ENCODE measurements at regions of chr15 and their contacts with region 1.

Region 1: DNA sequence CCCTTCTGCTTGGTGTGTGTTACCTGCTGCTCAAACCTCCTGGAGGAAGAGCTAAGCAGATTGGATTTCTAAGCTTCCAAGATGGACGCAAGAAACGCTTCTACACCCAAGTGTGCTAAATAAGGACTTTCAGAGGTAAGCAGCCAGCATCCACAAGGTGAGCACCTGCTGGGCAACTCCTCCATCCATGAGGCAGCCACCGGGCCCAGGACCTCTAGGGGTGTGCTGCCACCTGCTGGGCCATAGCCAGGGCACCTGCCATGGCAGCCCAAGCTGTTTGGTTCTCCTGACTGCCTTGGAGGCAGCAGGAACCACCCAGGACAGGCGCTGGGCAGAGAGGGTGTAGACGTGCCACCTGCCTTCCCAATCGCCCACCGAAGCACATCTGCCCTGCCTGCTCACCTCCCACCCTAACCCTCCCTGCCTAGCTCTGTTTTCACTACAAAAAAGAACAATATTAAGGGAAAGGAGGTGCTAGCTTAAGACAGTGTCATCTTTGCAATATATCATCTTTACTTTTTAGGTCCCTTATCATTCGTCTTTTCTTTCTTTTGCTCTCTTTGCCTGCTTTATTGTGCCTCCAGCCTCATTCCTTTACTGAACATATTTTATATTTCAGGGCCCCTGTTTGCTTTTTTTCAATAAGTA is 12.9 kb downstream of the C15orf62 start:
- DNase-seq: peak; percentile 70 to 88 (median 78)
- ATAC-seq: peak; percentile 94
- H3K4me3 ChIP-seq: no peak overlapping the region
- H3K4me3 Mint-ChIP-seq: no peak overlapping the region
- H3K27ac ChIP-seq: no peak overlapping the region
- H3K27ac Mint-ChIP-seq: peak overlapping the region; percentile 1
- H3K4me1 ChIP-seq: peaks cover 9% of the 10 kb centered on the region
- H3K4me1 Mint-ChIP-seq: peaks cover 32% of the 10 kb centered on the region
- H3K27me3 ChIP-seq: no peaks in the 10 kb centered on the region
- H3K27me3 Mint-ChIP-seq: no peaks in the 10 kb centered on the region
- CTCF ChIP-seq: peak; percentile 82

Region 2: GRCh38 chr15:40513609-40514008 is 269.1 kb before region 1 on chr15:
- CTCF ChIA-PET with region 1: no interaction called
- POLR2A ChIA-PET with region 1: no interaction called
- intact Hi-C with region 1: loop called in 1 of 2 experiments (anchors 2 kb)
- DNase-seq: no peak
- ATAC-seq: no peak
- H3K4me3 ChIP-seq: no peak overlapping the region
- H3K4me3 Mint-ChIP-seq: no peak overlapping the region
- H3K27ac ChIP-seq: no peak overlapping the region
- H3K27ac Mint-ChIP-seq: no peak overlapping the region
- H3K4me1 ChIP-seq: peaks cover 13% of the 10 kb centered on the region
- H3K4me1 Mint-ChIP-seq: peaks cover 16% of the 10 kb centered on the region
- H3K27me3 ChIP-seq: peaks cover 21 to 30% of the 10 kb centered on the region in 2 experiments
- H3K27me3 Mint-ChIP-seq: peaks cover 54% of the 10 kb centered on the region
- CTCF ChIP-seq: no peak

Region 3: DNA sequence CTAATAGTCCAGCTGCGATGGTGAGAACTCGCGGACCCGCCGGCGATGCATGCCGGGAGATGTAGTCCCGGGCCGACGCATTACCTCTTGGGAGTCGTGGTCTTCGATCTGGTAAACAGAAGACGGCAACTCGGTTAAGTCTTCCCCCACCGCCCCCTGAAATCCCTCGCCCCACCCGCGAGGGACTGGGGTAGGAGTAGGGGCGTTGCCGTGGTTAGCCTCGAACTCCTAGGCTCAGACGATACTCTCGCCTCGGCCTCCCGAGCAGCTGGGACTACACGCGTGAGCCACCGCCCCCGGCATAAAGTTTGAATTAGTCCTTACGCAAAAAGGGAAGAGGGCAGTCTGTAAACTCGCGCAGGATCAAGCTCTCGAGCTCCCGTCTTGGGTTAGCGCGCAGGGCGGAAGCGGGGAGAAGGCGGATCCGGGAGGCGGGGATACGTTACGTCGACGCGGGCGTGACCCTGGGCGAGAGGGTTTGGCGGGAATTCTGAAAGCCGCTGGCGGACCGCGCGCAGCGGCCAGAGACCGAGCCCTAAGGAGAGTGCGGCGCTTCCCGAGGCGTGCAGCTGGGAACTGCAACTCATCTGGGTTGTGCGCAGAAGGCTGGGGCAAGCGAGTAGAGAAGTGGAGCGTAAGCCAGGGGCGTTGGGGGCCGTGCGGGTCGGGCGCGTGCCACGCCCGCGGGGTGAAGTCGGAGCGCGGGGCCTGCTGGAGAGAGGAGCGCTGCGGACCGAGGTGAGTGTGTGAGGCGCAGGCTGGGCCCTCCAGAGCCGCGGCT is 87.8 kb before region 1 on chr15 and contains the start of gene RAD51:
- CTCF ChIA-PET with region 1: interaction called, 10 read pairs
- POLR2A ChIA-PET with region 1: interaction called, 5 read pairs
- intact Hi-C with region 1: no loop called
- DNase-seq: peak; percentile 87 to 96 (median 93)
- ATAC-seq: peak; percentile 91
- H3K4me3 ChIP-seq: peak within 1 kb of the TSS; percentile 82
- H3K4me3 Mint-ChIP-seq: peak within 1 kb of the TSS; percentile 97
- H3K27ac ChIP-seq: peak within 1 kb of the TSS; percentile 94 to 99
- H3K27ac Mint-ChIP-seq: peak within 1 kb of the TSS; percentile 98
- H3K4me1 ChIP-seq: peaks cover 23% of the 10 kb centered on the region
- H3K4me1 Mint-ChIP-seq: peaks cover 21% of the 10 kb centered on the region
- H3K27me3 ChIP-seq: no peaks in the 10 kb centered on the region
- H3K27me3 Mint-ChIP-seq: no peaks in the 10 kb centered on the region
- CTCF ChIP-seq: no peak
- total RNA-seq, gene RAD51: 0.64 to 1.5 TPM

Region 4: DNA sequence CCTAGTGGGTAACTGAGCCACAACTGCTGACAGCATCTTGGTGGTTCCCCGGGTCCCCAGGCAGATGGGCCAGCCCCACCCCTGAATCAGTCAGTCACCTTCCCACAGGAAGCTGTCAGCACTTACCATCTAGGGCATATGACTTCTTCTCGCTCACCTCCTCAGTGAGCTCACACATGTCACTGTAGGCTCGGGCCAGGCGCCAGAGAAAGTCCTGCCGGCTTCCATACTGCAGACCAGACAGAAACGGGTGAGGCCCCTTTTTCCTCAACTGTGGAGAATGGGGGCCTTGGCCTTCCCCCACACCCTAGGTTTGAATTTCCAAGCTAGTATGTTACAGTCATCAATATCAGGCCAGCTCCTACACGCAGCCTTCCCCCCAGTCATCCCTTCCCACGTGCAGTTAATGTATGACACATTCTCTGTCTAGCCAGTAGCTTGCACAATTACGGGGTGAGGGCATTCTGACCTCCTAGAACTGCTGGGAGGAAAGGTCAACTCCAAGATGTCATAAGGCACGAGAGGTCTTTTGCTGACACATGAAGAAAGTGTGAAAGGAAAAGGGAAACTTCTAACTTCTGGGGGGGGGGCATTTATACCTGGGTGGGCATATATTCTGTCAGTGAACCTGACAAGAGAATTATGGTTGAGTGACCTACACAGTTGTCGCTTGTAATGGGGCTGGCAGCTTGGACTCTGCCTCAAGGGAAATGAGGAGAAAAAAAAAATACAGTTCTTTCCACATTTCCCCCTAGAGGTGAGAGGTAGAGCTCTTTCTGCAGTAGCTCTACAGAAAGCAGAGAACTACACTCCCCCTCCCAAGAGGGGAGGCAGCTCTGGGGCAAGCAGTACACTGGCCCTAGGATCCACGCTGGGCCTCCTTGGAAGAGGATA is 38.5 kb before region 1 on chr15:
- CTCF ChIA-PET with region 1: interaction called, 8 read pairs
- POLR2A ChIA-PET with region 1: no interaction called
- intact Hi-C with region 1: loop called (anchors 5 kb)
- DNase-seq: peak; percentile 25 to 91 (median 44)
- ATAC-seq: peak; percentile 91
- H3K4me3 ChIP-seq: no peak overlapping the region
- H3K4me3 Mint-ChIP-seq: peak overlapping the region; percentile 20
- H3K27ac ChIP-seq: peak overlapping the region; percentile 52 to 81
- H3K27ac Mint-ChIP-seq: peak overlapping the region; percentile 96
- H3K4me1 ChIP-seq: peaks cover 22% of the 10 kb centered on the region
- H3K4me1 Mint-ChIP-seq: peaks cover 10% of the 10 kb centered on the region
- H3K27me3 ChIP-seq: no peaks in the 10 kb centered on the region
- H3K27me3 Mint-ChIP-seq: no peaks in the 10 kb centered on the region
- CTCF ChIP-seq: no peak

Region 5: DNA sequence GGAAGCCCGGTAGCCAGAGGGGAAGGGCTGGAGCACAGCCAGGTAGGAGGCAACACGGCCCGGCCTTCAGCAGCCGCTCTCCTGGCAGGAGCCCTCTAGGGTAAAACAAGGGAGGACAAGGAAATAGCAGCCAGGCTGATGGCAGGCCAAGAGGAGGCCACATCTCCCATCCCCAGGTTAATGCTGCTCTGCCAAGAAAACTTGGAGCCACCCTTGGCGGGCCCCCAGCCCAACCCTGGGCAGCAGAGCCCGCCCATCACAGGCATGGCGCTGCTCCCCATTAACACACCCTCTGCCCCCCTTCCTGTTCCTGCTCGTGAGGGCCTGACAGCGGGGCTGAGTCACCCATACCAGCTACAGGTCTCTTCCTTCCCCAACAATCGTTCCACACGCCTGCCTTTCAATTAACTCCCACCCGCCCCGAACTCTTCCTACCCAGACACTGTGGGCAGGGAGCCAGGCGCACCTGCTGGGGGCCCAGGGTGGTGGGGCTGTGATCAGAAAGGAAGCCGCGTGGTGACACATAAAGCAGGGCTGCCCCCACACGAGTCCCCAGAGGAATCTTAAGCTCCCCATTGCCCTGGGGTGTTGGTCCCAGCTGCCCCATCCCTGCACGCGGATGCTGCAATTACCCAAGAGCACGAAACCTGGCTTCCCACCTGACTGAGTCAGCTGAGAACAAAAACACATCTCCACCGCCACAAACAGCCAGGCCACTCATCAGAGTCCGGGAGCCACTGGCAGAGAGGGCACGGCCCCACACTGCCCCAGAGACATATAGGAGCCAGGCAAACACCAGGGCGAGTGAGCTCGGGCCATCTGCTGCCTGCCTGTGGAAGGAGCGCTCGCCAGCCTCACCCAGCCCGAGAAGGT is 13.2 kb before region 1 on chr15 and contains the start of gene C15orf62:
- CTCF ChIA-PET with region 1: interaction called, 19 read pairs
- POLR2A ChIA-PET with region 1: no interaction called
- intact Hi-C with region 1: no loop called
- DNase-seq: peak in 12 of 14 experiments; percentile 30 to 84 (median 51)
- ATAC-seq: peak; percentile 54
- H3K4me3 ChIP-seq: no peak within 1 kb of the TSS
- H3K4me3 Mint-ChIP-seq: peak within 1 kb of the TSS; percentile 50
- H3K27ac ChIP-seq: peak within 1 kb of the TSS in 1 of 2 donors; percentile 25
- H3K27ac Mint-ChIP-seq: peak within 1 kb of the TSS; percentile 89
- H3K4me1 ChIP-seq: peaks cover 39% of the 10 kb centered on the region
- H3K4me1 Mint-ChIP-seq: peaks cover 33% of the 10 kb centered on the region
- H3K27me3 ChIP-seq: no peaks in the 10 kb centered on the region
- H3K27me3 Mint-ChIP-seq: no peaks in the 10 kb centered on the region
- CTCF ChIP-seq: no peak
- total RNA-seq, gene C15orf62: 0.77 to 0.98 TPM